Lower leg skin (tissue), 4 donors: ENCODE measurements at regions of chr15 and their contacts with region 1.

Region 1: DNA sequence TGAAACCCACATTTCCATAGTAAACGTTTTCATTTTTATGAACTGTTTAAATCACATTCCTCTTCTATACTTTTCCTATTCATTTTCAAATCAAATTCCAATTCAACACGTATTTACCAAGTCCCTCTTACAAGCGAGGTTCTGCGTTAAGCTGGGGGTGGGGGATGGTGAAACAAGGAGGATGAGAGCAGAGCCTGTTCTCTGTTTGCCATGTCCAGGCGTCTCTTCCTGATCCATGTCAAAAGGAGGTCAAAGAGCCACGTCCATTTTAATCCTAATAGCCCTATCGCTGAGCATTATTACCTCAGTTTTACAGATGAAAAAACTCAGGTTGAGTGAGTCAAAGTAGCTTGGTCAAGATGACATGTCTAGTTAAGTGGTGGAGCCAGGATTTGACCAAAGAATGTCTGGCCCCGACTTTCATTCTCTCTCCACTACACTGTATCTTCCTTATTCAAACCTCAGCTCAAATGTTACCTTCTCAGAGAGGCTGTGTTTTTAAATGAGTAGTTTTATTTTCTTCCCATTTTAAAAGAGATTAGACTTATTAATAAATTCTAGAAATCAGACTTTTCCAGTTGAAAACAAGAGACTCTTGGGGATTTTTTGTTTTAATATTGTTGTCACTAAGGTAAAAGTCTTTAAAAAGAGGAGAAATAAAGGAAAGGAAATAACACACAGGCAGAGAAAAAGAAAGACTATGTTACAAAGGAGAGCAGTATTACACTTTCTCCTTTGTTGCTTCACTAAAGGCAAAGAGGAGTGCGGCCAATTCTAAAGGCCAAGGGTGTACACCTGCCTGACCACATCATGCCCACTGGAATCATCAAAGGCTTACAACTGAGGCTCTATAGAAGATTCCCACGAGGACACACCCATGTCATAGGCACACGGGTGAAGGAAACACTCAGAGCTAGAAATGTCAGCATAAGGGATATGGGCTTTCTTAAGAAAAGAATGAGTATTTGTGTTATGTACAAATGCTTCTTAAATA is 42.4 kb downstream of the MYO5A start:
- DNase-seq: no peak
- H3K4me3 ChIP-seq: no peak overlapping the region
- CTCF ChIP-seq: no peak
- POLR2A ChIP-seq: no peak

Region 2: GRCh38 chr15:52421029-52421428 is 65.3 kb before region 1 on chr15:
- intact Hi-C with region 1: loop called (anchors 5 kb)
- DNase-seq: no peak
- H3K4me3 ChIP-seq: no peak overlapping the region
- CTCF ChIP-seq: no peak
- POLR2A ChIP-seq: no peak

Region 3: DNA sequence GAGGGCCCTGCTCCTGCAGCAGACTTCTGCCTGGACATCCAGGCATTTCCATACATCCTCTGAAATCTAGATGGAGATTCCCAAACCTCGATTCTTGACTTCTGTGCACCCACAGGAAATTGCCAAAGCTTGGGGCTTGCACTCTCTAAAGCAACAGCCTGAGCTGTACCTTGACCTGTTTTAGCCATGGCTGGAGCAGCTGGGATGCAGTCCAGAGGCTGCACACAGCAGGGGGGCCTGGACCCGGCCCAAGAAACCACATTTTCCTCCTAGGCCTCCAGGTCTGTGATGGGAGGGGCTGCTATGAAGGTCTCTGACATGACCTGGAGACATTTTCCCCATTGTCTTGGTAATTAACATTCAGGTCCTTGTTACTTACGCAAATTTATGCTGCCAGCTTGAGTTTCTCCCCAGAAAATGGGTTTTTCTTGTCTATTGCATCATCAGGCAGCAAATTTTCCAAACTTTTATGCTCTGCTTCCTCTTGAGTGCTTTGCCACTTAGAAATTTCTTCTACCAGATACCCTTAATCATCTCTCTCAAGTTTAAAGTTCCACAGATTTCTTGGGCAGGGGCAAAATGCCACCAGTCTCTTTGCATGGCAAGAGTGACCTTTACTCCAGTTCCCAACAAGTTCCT is 54.2 kb after region 1 on chr15:
- intact Hi-C with region 1: no loop called
- DNase-seq: no peak
- H3K4me3 ChIP-seq: no peak overlapping the region
- CTCF ChIP-seq: no peak
- POLR2A ChIP-seq: no peak

Region 4: GRCh38 chr15:53862386-53862785 is 1376.1 kb after region 1 on chr15:
- intact Hi-C with region 1: no loop called
- DNase-seq: no peak
- H3K4me3 ChIP-seq: no peak overlapping the region
- CTCF ChIP-seq: no peak
- POLR2A ChIP-seq: no peak